Caco-2 (cell line): ENCODE measurements at regions of chr1 and their contacts with region 1.

Region 1: GRCh38 chr1:11805447-11806306 is at the starts of genes CLCN6 and MTHFR:
- DNase-seq: peak; percentile 99
- H3K4me3 ChIP-seq: peak within 1 kb of the TSS; percentile 93
- H3K4me3 Mint-ChIP-seq: peak within 1 kb of the TSS; percentile 96
- H3K27ac Mint-ChIP-seq: peak within 1 kb of the TSS; percentile 94
- H3K4me1 ChIP-seq: peaks cover 21% of the 10 kb centered on the region
- H3K4me1 Mint-ChIP-seq: no peaks in the 10 kb centered on the region
- H3K27me3 ChIP-seq: no peaks in the 10 kb centered on the region
- H3K27me3 Mint-ChIP-seq: no peaks in the 10 kb centered on the region
- CTCF ChIP-seq: no peak
- total RNA-seq, gene CLCN6: 30.4 and 34.9 TPM in 2 replicates
- total RNA-seq, gene MTHFR: 27.8 and 28.6 TPM in 2 replicates

Region 2: GRCh38 chr1:11735854-11736745 is 69.6 kb before region 1 on chr1 and contains the start of gene AGTRAP:
- CTCF ChIA-PET with region 1: no interaction called
- POLR2A ChIA-PET with region 1: no interaction called
- intact Hi-C with region 1: loop called (anchors 10 kb)
- DNase-seq: peak; percentile 92 to 93
- H3K4me3 ChIP-seq: peak within 1 kb of the TSS; percentile 83
- H3K4me3 Mint-ChIP-seq: peak within 1 kb of the TSS; percentile 96
- H3K27ac Mint-ChIP-seq: peak within 1 kb of the TSS; percentile 83
- H3K4me1 ChIP-seq: peaks cover 6% of the 10 kb centered on the region
- H3K4me1 Mint-ChIP-seq: no peaks in the 10 kb centered on the region
- H3K27me3 ChIP-seq: no peaks in the 10 kb centered on the region
- H3K27me3 Mint-ChIP-seq: no peaks in the 10 kb centered on the region
- CTCF ChIP-seq: peak in 1 of 2 experiments; percentile 25
- total RNA-seq, gene AGTRAP: 44.2 and 44.4 TPM in 2 replicates

Region 3: DNA sequence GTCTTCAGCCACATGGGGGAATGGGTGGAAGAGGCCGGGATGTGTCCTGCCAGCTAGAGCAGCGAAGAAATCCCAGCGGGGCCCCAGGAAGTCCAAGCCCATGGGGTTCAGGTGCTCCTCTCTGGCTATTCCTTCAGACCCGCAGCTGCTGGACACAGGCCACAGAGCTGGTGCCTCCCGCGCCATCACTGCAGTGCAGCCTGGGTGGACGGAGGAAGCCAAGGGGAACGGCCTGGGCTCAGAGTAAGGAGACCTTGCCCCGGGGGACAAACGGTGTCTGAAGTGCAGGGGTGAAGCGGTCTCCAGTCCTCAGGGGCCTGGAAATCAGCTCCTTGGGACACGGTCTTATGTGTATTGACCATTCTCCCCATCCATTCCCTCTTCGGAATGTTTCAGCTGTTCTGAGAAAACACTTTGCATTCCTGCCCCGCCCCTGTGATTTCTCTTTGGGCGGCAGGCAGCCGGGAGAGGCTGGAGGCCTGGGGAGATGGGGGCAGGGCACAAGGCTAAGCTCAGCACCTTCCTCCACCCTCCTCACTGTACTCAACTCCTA is 18.4 kb before region 1 on chr1:
- CTCF ChIA-PET with region 1: interaction called, 3 read pairs
- POLR2A ChIA-PET with region 1: interaction called, 5 read pairs
- intact Hi-C with region 1: loop called (anchors 1 kb)
- DNase-seq: peak; percentile 77 to 81
- H3K4me3 ChIP-seq: no peak overlapping the region
- H3K4me3 Mint-ChIP-seq: peak overlapping the region; percentile 42
- H3K27ac Mint-ChIP-seq: peak overlapping the region; percentile 89
- H3K4me1 ChIP-seq: peaks cover 34% of the 10 kb centered on the region
- H3K4me1 Mint-ChIP-seq: peaks cover 19% of the 10 kb centered on the region
- H3K27me3 ChIP-seq: no peaks in the 10 kb centered on the region
- H3K27me3 Mint-ChIP-seq: no peaks in the 10 kb centered on the region
- CTCF ChIP-seq: no peak